Posterior cingulate gyrus (tissue), 11 donors: ENCODE measurements at regions of chr19 and their contacts with region 1.

Region 1: GRCh38 chr19:33778089-33778791 is 18.4 kb upstream of the KCTD15 start:
- DNase-seq: peak; percentile 64 to 98 (median 86)

Region 2: DNA sequence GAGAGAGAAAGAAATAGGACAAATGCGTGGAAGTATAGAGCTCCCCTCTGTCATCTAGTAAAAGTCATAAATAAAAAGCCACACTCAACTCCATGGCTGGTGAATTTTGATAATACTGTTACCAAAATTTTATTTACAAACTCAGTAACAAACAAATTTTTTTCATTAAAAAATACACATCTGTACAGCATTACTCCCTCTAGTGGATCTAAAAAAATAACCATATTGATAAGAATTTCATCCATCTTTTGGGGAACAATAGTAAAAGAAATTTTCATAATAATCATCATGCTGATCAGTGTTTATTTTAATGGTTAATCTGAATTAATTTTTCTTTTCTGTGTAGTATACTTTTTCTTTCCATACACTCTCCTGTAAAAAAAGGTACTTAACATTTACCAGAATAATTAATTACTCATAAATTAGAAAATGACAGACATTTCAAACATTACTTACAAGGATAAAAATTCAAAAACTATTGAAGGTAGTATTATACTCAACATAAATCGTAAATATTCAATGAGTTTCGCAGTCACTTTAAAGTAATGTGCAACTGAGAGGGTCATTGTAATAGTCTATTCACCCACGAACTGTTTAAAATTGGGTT is 220.6 kb after region 1 on chr19:
- intact Hi-C with region 1: loop called (anchors 5 kb)
- DNase-seq: no peak

Region 3: DNA sequence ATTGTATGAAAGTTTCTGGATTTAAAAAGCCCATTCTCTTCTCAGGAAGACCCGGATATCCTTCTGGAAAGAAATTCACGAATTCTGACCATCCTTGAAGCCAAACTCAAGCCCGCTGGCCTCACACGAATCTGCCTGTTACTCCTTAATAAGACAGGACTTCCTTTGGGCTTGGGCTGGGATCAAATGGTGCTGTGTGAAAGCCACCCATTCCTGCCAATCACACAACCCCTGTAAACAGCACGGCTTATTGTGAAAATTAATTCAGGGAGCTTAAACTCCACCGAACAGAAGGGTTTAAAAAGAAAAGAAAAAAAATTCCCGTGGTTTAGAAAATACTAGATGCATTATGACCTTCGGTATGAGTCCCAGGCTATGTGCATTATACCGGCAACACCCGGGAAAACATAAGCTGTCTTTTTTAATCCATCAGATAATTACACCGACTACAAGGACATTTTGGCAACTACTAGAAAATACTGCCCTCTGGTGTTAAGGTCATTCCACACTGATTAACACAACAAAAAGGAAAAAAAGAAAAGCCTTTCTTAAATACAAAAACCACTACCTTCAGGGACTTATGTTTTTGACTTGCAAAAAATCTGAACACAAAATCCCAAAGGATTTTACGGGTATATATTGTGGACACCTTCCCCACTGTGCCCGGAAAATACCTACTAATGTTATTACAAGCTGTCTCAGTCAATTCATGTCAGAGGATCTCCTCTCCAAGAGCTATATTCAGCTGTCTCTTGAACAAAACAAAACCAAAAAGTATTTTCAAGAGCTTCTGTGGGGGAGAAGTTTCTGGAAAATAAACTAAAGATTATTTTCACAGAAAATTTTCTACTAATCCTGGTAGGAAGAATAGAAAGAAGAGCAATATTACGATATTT is 318.0 kb after region 1 on chr19:
- intact Hi-C with region 1: loop called (anchors 1 kb)
- DNase-seq: no peak

Region 4: DNA sequence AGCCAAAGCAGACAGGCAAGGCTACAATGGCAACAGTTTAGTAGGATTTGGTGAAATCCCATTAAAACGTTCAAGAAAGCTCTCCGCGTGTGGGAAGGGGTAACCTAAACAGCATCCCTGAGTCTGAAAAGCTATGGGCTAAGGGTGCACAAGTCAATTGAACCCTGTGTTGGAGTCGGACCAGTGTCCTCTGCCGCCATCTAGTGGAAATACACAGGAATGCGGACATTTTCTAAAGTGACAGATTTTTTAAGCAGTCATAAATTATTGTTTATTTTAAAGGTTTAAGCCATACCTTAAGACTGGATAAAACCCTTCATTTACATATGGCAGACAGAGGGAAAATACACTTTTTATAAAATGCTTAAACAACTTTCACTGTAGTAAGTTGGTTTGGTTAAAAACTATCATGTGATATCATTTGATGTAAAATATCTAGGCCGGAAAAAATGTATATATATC is 367.5 kb after region 1 on chr19:
- intact Hi-C with region 1: loop called (anchors 2 kb)
- DNase-seq: peak in 6 of 10 donors; percentile 16 to 85 (median 47)

Region 5: DNA sequence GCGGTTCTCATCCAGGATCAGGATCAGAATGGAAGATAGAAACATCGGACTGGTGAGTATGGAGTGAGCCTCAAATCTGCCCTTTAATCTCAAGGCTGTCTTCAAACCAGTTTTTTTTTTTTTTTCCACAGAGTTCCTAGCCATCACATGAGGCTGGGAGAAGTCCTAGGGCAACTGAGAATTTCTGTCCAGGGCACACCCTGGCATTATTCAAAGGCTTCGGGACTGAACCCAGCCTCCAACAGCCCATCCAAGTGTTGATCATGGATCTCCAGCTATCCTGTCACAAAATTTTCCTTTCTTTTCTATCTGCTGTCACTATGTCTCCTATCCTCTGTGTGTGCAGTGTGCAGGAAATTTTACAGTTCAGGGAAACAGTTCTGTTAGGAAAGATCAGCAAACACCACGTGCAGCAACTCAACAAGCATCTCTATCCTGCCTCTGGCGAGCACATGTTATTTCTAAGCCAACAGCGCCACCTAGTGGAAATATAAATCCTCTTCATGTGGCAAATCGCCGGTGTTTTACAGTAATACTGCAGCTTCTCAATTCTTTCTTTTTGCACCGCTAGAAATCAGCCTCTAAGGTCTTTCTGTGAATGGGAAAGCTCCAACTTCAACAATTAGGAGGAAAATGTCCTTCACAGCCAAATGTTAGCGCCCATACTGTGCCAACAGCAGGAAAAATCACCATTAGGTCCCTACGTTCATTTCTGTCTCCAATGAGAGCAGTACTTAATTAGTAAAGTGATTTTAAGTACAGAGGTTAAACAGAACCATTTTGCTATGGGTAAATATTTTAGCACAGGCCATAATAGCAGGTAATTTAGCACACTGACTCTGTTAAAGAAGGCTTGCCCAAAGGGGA is 934.4 kb after region 1 on chr19:
- intact Hi-C with region 1: loop called (anchors 10 kb)
- DNase-seq: peak in 4 of 10 donors; percentile 18 to 50 (median 33)